ENCODE measurements at regions of chr10 and their contacts with region 1.

Region 1: DNA sequence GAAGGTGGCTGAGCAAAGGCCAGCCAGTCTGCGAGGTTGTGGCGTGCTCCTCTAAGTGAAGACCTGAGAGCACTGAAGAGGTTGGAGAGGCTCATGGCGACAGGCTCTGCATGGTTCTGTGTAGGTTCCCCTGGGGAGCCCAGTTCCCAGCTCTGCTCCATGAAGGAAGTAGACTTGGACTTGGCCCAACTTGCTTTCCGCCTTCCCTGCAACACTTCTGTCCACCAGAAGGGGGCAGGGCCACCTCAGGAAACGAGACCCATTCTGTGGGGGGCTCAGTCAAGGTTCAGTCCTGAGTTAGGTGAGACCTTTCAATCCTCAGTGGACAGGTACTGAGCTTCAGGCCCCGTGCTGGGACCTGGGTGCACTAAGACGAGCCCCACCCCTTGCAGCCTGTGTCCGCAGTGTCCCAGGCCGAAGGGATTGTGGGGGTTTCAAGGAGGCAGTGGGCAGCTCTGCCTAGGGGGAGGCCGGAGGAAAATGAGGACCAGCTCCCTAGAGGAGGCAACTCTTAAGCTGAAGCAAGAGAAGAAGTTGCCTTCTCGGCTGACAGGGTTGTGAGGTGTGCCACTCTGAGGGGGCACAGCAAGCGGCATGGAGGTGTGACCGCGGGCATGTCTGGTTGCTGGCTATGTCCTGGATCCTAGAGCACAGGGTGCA is 15.0 kb upstream of the PCBD1 start:
- DNase-seq: no peak
- ATAC-seq: peak; percentile 57

Region 2: GRCh38 chr10:71285180-71285545 is 381.8 kb after region 1 on chr10:
- intact Hi-C with region 1: loop called (anchors 5 kb)
- DNase-seq: peak; percentile 65
- ATAC-seq: peak; percentile 65

Measured in Right ventricle myocardium inferior (tissue), 1 donor.